ENCODE measurements at regions of chr12 and their contacts with region 1.

Region 1: GRCh38 chr12:3299929-3300832 is 190.8 kb upstream of the PRMT8 start:
- DNase-seq: peak; percentile 90 to 92
- ATAC-seq: peak; percentile 91

Region 2: GRCh38 chr12:3777206-3777809 is 477.1 kb after region 1 on chr12:
- intact Hi-C with region 1: loop called in 1 of 2 experiments (anchors 10 kb)
- DNase-seq: no peak
- ATAC-seq: peak; percentile 90

Region 3: DNA sequence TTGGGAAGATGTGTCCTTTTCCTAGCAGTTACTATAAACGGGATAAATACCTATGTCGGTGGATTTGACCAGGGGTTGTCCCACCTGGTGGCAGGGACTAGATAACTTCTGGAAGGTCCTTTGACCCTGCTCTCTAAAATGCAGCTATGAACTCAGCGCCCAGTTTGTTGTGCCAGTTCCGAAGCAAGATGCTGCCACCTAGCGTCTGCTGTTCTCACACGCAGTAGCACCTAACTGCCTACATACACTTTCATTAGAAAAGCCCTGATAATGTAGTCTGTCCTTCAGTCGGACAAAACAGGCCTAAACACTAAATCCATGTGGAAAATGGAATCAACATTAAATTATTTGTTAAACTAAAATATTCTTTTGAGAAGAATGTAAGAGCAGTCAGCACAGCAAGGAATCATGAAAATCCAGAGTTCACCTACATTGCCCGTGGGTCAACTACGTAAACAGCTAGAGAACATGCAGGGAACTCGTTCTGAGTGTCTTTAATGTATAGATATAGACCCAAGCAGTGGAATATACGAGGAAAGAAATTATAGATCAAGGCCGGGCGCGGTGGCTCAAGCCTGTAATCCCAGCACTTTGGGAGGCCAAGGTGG is 503.8 kb after region 1 on chr12:
- intact Hi-C with region 1: loop called in 1 of 2 experiments (anchors 10 kb)
- DNase-seq: peak; percentile 55 to 86
- ATAC-seq: peak; percentile 87

Measured in left colon (tissue), 2 donors.